ENCODE measurements at regions of chr4 and their contacts with region 1.

Region 1: DNA sequence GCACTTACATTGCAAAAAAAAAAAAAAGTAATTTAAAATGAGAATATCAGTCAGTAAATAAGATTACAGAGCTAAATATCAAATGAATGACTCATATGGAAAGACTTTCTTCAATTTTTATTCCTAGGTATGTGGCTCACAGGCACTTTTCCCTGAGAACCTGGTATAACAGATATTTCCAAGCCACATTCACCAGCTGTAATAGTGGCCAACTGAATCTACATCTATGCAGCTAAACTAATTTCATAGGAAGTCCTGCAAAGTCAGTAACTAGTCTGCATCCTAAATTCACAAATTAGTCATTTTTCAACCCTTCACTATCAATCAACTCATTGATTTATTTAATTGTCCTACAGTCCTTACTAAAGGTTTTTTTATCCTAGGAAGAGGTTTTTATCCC is 5.6 kb downstream of the PDE5A start:
- DNase-seq: no peak
- H3K4me3 Mint-ChIP-seq: no peak overlapping the region
- H3K27ac Mint-ChIP-seq: no peak overlapping the region
- H3K4me1 Mint-ChIP-seq: peaks cover 9% of the 10 kb centered on the region
- H3K27me3 Mint-ChIP-seq: peaks cover 9% of the 10 kb centered on the region

Region 2: GRCh38 chr4:119525771-119526712 is 97.0 kb before region 1 on chr4:
- CTCF ChIA-PET with region 1: interaction called, 11 read pairs
- intact Hi-C with region 1: no loop called
- DNase-seq: no peak
- H3K4me3 Mint-ChIP-seq: no peak overlapping the region
- H3K27ac Mint-ChIP-seq: no peak overlapping the region
- H3K4me1 Mint-ChIP-seq: no peaks in the 10 kb centered on the region
- H3K27me3 Mint-ChIP-seq: no peaks in the 10 kb centered on the region